ENCODE measurements at regions of chr13 and their contacts with region 1.

Region 1: DNA sequence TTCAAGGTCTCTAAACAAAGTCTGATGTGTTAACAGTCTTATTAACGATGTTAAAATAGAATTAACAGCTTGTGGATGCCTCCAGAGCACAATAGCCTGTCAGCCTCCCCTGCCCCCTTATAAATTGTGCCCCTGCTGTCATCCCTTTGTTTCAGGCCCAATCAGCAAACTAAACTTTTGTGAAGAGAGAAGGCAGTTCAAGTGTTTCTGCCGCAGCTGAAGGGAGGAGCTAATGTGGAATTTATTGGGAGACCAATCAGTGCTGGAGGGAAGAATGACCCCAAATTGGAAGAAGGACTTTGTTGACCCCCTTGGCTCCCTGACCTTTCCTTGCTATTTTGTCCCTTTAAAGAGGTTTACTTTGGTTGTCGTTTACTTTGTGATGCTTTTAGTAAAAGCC is 160.5 kb downstream of the TM9SF2 start:
- DNase-seq: no peak
- ATAC-seq: no peak
- H3K4me3 ChIP-seq: no peak overlapping the region
- H3K4me3 Mint-ChIP-seq: no peak overlapping the region
- H3K27ac ChIP-seq: no peak overlapping the region
- H3K27ac Mint-ChIP-seq: no peak overlapping the region
- H3K4me1 ChIP-seq: peaks cover 29% of the 10 kb centered on the region
- H3K4me1 Mint-ChIP-seq: peaks cover 34% of the 10 kb centered on the region
- H3K27me3 ChIP-seq: no peaks in the 10 kb centered on the region
- H3K27me3 Mint-ChIP-seq: no peaks in the 10 kb centered on the region
- CTCF ChIP-seq: no peak

Region 2: GRCh38 chr13:99648927-99649326 is 12.9 kb before region 1 on chr13:
- CTCF ChIA-PET with region 1: interaction called, 5 read pairs
- POLR2A ChIA-PET with region 1: no interaction called
- intact Hi-C with region 1: loop called in 1 of 2 experiments (anchors 2 kb)
- DNase-seq: no peak
- ATAC-seq: no peak
- H3K4me3 ChIP-seq: no peak overlapping the region
- H3K4me3 Mint-ChIP-seq: no peak overlapping the region
- H3K27ac ChIP-seq: no peak overlapping the region
- H3K27ac Mint-ChIP-seq: no peak overlapping the region
- H3K4me1 ChIP-seq: no peaks in the 10 kb centered on the region
- H3K4me1 Mint-ChIP-seq: no peaks in the 10 kb centered on the region
- H3K27me3 ChIP-seq: no peaks in the 10 kb centered on the region
- H3K27me3 Mint-ChIP-seq: no peaks in the 10 kb centered on the region
- CTCF ChIP-seq: no peak

Region 3: GRCh38 chr13:99821741-99822140 is 159.9 kb after region 1 on chr13:
- CTCF ChIA-PET with region 1: no interaction called
- POLR2A ChIA-PET with region 1: interaction called, 40 read pairs
- intact Hi-C with region 1: loop called in 1 of 2 experiments (anchors 5 kb)
- DNase-seq: no peak
- ATAC-seq: no peak
- H3K4me3 ChIP-seq: no peak overlapping the region
- H3K4me3 Mint-ChIP-seq: no peak overlapping the region
- H3K27ac ChIP-seq: no peak overlapping the region
- H3K27ac Mint-ChIP-seq: no peak overlapping the region
- H3K4me1 ChIP-seq: peaks cover 11% of the 10 kb centered on the region
- H3K4me1 Mint-ChIP-seq: peaks cover 18% of the 10 kb centered on the region
- H3K27me3 ChIP-seq: no peaks in the 10 kb centered on the region
- H3K27me3 Mint-ChIP-seq: no peaks in the 10 kb centered on the region
- CTCF ChIP-seq: no peak

Measured in CD4-positive, alpha-beta T cell (primary cell).